ENCODE measurements at regions of chr1 and their contacts with region 1.

Region 1: GRCh38 chr1:203340112-203340804 is 10.7 kb downstream of the FMOD start:
- DNase-seq: peak; percentile 92
- H3K4me3 ChIP-seq: no peak overlapping the region
- H3K27ac ChIP-seq: peak overlapping the region; percentile 20
- H3K4me1 ChIP-seq: peaks cover 58% of the 10 kb centered on the region
- CTCF ChIP-seq: peak; percentile 99

Region 2: DNA sequence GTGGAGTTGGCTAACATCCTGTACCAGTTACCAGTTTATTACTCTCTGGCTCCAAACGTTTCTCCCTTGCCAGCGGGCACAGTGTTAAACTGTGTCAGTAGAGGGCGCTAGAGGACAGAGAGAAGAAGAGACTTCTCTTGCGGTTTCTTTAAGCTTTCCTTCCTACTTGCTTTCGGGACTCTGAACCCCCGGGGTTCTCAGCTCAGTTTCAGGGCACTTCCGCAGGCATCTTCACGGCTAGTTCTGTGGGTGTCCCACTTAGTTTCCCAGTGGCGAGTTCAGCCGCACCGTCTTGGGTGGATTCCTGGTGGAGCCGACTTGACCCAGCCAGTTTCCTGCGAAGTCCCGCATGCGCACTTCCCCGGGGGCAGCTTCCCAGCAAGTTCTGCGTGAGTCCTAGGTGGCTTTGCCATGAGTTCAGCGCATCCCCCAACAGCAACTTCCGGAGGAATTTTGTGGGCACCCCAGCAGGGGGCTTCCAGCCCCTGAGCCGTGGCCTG is 72.9 kb before region 1 on chr1:
- CTCF ChIA-PET with region 1: interaction called, 21 read pairs
- POLR2A ChIA-PET with region 1: interaction called, 5 read pairs
- intact Hi-C with region 1: loop called (anchors 1 kb)
- DNase-seq: peak; percentile 87
- H3K4me3 ChIP-seq: peak overlapping the region; percentile 33
- H3K27ac ChIP-seq: no peak overlapping the region
- H3K4me1 ChIP-seq: peaks cover 81% of the 10 kb centered on the region
- CTCF ChIP-seq: peak; percentile 98

Region 3: DNA sequence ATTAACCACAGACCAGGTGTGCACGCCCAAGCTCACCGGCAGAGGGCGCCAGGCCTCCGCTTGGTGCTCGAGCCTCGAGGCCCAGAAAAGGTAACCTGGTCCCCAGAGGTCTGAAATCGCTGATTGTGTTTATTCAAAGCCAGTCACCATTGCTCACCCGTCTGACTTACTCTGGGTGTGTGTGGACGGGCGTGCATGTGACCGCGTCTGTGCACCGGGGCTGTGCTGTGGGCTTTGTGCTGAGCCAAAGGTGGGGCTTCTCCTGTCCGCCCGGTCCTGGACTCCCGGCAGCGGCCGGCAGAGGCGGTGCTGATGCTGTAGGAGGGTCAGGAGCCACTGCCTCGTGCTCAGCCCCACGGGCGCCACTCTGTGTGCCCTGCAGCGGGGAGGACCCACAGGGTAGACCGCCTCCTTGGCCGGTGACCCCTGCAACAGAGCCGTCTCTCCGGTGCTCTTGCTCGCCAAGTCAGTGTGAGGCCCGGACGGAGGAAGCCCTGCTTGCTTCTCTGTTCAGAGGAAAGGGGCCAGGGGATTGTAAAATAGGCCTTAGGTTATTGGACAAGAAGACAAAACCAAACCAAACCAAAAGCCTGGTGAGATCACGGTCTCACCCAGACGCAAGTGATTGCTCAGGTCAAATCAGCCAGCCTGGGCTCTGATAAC is 66.9 kb before region 1 on chr1:
- CTCF ChIA-PET with region 1: interaction called, 8 read pairs
- POLR2A ChIA-PET with region 1: interaction called, 8 read pairs
- intact Hi-C with region 1: loop called (anchors 1 kb)
- DNase-seq: peak; percentile 94
- H3K4me3 ChIP-seq: peak overlapping the region; percentile 66
- H3K27ac ChIP-seq: peak overlapping the region; percentile 88
- H3K4me1 ChIP-seq: peaks cover 98% of the 10 kb centered on the region
- CTCF ChIP-seq: peak; percentile 99

Region 4: GRCh38 chr1:203304919-203305808 is 35.1 kb before region 1 on chr1 and contains the start of gene BTG2:
- CTCF ChIA-PET with region 1: no interaction called
- POLR2A ChIA-PET with region 1: interaction called, 12 read pairs
- intact Hi-C with region 1: loop called (anchors 2 kb)
- DNase-seq: peak; percentile 91
- H3K4me3 ChIP-seq: peak within 1 kb of the TSS; percentile 96
- H3K27ac ChIP-seq: peak within 1 kb of the TSS; percentile 98
- H3K4me1 ChIP-seq: peaks cover 66% of the 10 kb centered on the region
- CTCF ChIP-seq: no peak
- total RNA-seq, gene BTG2: 146 and 156 TPM in 2 replicates

Region 5: GRCh38 chr1:203326830-203327683 is 13.2 kb before region 1 on chr1:
- CTCF ChIA-PET with region 1: interaction called, 4 read pairs
- POLR2A ChIA-PET with region 1: interaction called, 20 read pairs
- intact Hi-C with region 1: no loop called
- DNase-seq: peak; percentile 96
- H3K4me3 ChIP-seq: peak overlapping the region; percentile 67
- H3K27ac ChIP-seq: peak overlapping the region; percentile 98
- H3K4me1 ChIP-seq: peaks cover 90% of the 10 kb centered on the region
- CTCF ChIP-seq: no peak

Region 6: GRCh38 chr1:203428981-203429599 is 88.8 kb after region 1 on chr1:
- CTCF ChIA-PET with region 1: no interaction called
- POLR2A ChIA-PET with region 1: no interaction called
- intact Hi-C with region 1: no loop called
- DNase-seq: no peak
- H3K4me3 ChIP-seq: no peak overlapping the region
- H3K27ac ChIP-seq: no peak overlapping the region
- H3K4me1 ChIP-seq: peaks cover 10% of the 10 kb centered on the region
- CTCF ChIP-seq: no peak

Region 7: DNA sequence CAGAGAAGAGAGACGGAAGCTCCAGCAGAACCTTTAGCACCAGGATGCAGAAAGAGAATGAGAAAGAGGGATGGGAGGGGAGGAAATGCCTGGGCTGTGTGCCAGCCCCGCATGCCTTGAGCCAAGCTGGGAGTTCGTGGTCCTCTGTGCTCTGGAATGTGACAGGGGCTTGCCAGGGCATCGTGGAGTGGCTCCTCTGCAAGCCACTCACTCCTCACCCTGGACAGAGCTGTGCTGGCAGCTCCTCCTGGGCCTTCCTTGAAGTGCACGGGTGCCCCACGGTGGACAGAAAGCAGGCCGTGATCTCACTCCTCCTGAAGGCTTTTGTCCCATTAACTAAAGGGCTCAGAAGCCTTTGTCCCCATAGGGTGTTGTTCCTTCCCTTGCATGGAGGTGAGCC is 100.5 kb after region 1 on chr1:
- CTCF ChIA-PET with region 1: interaction called, 20 read pairs
- POLR2A ChIA-PET with region 1: interaction called, 5 read pairs
- intact Hi-C with region 1: loop called (anchors 1 kb)
- DNase-seq: peak; percentile 65
- H3K4me3 ChIP-seq: no peak overlapping the region
- H3K27ac ChIP-seq: no peak overlapping the region
- H3K4me1 ChIP-seq: no peaks in the 10 kb centered on the region
- CTCF ChIP-seq: peak; percentile 63

Region 8: DNA sequence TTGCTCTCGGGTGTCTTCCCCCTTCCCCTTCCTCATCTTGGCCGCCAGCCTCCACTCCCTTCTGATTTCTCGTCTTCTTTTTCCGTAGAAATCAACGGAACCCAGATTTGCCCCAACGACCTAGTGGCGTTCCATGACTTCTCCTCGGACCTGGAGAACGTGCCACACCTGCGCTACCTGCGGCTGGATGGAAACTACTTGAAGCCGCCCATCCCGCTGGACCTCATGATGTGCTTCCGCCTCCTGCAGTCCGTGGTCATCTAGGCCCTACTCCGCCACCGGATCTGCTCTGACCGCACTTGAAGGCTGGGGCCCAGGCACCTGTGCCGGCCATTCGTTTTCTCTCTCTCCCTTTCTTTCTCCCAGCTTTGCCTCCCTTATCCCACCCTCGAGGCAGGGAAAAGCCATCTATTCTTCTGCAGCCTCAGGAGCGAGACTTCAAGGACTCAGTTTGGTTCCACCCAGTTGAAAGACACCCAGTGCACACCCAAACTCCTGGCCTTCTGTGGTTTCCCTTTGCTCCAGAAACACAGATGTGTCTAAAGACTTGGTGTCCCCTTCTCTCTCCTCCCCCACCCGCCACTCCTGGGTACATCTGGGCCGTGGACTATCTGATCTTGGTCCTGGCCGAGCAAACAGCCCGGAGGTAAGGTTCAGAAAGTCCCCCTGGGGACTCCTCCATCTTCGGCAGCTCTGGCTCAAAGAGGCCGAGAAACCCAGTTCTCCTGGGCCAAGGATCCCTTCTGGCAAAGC is 146.5 kb after region 1 on chr1:
- CTCF ChIA-PET with region 1: interaction called, 6 read pairs
- POLR2A ChIA-PET with region 1: no interaction called
- intact Hi-C with region 1: loop called (anchors 1 kb)
- DNase-seq: no peak
- H3K4me3 ChIP-seq: peak overlapping the region; percentile 65
- H3K27ac ChIP-seq: no peak overlapping the region
- H3K4me1 ChIP-seq: peaks cover 11% of the 10 kb centered on the region
- CTCF ChIP-seq: no peak